A673 (cell line): ENCODE measurements at regions of chr16 and their contacts with region 1.

Region 1: DNA sequence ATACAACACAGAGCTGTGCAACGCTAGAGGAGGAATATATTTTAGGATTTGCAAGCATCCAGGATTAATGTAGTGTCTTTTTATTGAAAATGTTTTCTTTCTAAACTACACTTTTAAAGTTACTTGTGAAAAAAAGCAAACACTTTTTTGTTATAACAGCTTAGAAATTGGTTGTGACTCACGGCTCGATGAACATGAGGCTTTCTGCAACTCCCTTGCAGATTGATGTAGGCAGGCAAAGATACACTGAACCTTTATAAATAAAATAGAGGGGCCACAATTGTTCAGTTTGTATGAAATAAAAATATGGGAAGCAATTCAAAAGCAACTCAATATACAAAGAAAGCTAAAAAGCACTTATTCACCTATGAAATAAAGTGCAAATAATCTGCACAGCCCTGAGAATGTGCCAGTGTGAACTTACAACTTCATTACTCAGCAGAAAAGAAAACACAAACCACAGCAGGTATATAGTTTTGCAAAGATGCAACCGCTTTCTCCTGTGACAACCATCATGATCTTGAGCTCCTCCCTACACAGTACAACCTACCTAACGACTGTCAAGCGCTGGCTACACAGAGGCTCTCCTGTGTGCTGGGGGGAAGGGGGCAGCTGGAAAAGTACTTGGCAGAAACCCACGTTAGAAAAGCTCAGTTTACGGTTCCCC is 965 bp downstream of the LUC7L start:
- DNase-seq: no peak
- H3K4me3 ChIP-seq: peak overlapping the region; percentile 91
- H3K27ac ChIP-seq: peak overlapping the region; percentile 98
- H3K4me1 ChIP-seq: peaks cover 11% of the 10 kb centered on the region
- H3K27me3 ChIP-seq: no peaks in the 10 kb centered on the region
- CTCF ChIP-seq: no peak

Region 2: GRCh38 chr16:200388-200787 is 27.9 kb before region 1 on chr16:
- CTCF ChIA-PET with region 1: interaction called, 3 read pairs
- POLR2A ChIA-PET with region 1: interaction called, 15 read pairs
- intact Hi-C with region 1: no loop called
- DNase-seq: peak; percentile 30
- H3K4me3 ChIP-seq: no peak overlapping the region
- H3K27ac ChIP-seq: no peak overlapping the region
- H3K4me1 ChIP-seq: peaks cover 4% of the 10 kb centered on the region
- H3K27me3 ChIP-seq: no peaks in the 10 kb centered on the region
- CTCF ChIP-seq: no peak

Region 3: GRCh38 chr16:212999-213398 is 15.3 kb before region 1 on chr16:
- CTCF ChIA-PET with region 1: no interaction called
- POLR2A ChIA-PET with region 1: interaction called, 14 read pairs
- intact Hi-C with region 1: no loop called
- DNase-seq: no peak
- H3K4me3 ChIP-seq: no peak overlapping the region
- H3K27ac ChIP-seq: no peak overlapping the region
- H3K4me1 ChIP-seq: no peaks in the 10 kb centered on the region
- H3K27me3 ChIP-seq: no peaks in the 10 kb centered on the region
- CTCF ChIP-seq: no peak

Region 4: GRCh38 chr16:303760-304505 is 75.6 kb after region 1 on chr16:
- CTCF ChIA-PET with region 1: no interaction called
- POLR2A ChIA-PET with region 1: no interaction called
- intact Hi-C with region 1: no loop called
- DNase-seq: no peak
- H3K4me3 ChIP-seq: no peak overlapping the region
- H3K27ac ChIP-seq: no peak overlapping the region
- H3K4me1 ChIP-seq: no peaks in the 10 kb centered on the region
- H3K27me3 ChIP-seq: no peaks in the 10 kb centered on the region
- CTCF ChIP-seq: no peak